Sigmoid colon (tissue), 7 donors: ENCODE measurements at regions of chr6 and their contacts with region 1.

Region 1: DNA sequence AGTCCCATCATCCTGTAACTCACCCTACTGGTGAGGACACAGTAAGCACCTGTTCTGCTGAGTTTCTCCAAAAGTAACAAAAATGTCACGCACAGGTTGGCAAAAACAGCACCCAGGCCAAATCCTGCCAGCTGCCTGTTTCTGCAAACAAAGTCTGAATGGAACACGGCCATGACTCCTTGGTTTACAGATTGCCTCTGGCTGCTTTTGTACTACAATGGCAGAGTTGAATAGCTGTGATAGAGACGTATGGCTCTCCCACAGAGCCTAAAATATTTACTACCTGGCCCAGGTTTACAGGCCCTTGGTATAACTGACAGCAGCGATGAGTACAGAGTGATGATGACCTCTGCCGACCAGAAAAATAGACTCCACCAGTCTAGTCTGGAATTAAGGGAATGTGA is 52.6 kb downstream of the CNKSR3 start:
- DNase-seq: no peak
- H3K4me3 ChIP-seq: no peak overlapping the region
- H3K27ac ChIP-seq: peak overlapping the region; percentile 74 to 90 (median 79)
- H3K4me1 ChIP-seq: peaks cover 0 to 89% (median 67%) of the 10 kb centered on the region in 4 donors
- H3K27me3 ChIP-seq: no peaks in the 10 kb centered on the region
- CTCF ChIP-seq: no peak
- EP300 ChIP-seq: no peak
- POLR2A ChIP-seq: no peak

Region 2: GRCh38 chr6:154234019-154234772 is 223.7 kb before region 1 on chr6:
- intact Hi-C with region 1: no loop called
- DNase-seq: no peak
- H3K4me3 ChIP-seq: no peak overlapping the region
- H3K27ac ChIP-seq: no peak overlapping the region
- H3K4me1 ChIP-seq: no peaks in the 10 kb centered on the region
- H3K27me3 ChIP-seq: no peaks in the 10 kb centered on the region
- CTCF ChIP-seq: no peak
- EP300 ChIP-seq: no peak
- POLR2A ChIP-seq: no peak

Region 3: DNA sequence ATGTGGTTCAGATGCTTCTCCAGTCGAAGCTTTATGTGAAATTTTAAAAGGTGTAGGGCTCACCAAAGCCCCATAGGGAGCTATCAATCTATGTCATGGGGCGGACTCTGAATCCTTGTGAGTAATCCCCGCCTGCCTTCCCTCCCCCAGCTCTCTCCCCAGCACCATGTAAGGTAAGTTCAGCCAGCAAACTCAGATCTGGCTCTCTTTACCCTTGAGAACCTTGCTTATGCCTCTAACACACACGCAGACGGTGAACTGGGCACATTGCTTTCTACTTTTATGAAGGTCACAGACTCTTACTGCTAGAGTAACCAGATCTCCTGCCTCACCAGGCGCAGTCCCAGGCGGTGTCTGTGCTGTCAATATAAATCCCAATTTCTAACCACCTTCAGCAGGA is 135.2 kb after region 1 on chr6:
- intact Hi-C with region 1: loop called (anchors 5 kb)
- DNase-seq: peak; percentile 91
- H3K4me3 ChIP-seq: no peak overlapping the region
- H3K27ac ChIP-seq: peak overlapping the region; percentile 52 to 88 (median 82)
- H3K4me1 ChIP-seq: peaks cover 0 to 27% (median 16%) of the 10 kb centered on the region in 4 donors
- H3K27me3 ChIP-seq: no peaks in the 10 kb centered on the region
- CTCF ChIP-seq: no peak
- EP300 ChIP-seq: peak; percentile 73 to 94 (median 82)
- POLR2A ChIP-seq: no peak